Left ventricle myocardium inferior (tissue), 1 donor: ENCODE measurements at regions of chr16 and their contacts with region 1.

Region 1: GRCh38 chr16:8963825-8964441 is at the start of gene USP7:
- DNase-seq: peak; percentile 95
- H3K4me3 ChIP-seq: peak within 1 kb of the TSS; percentile 85
- H3K27ac ChIP-seq: peak within 1 kb of the TSS; percentile 88
- H3K4me1 ChIP-seq: peaks cover 46% of the 10 kb centered on the region
- H3K27me3 ChIP-seq: no peaks in the 10 kb centered on the region
- CTCF ChIP-seq: no peak
- total RNA-seq, gene USP7: 54.7 TPM

Region 2: DNA sequence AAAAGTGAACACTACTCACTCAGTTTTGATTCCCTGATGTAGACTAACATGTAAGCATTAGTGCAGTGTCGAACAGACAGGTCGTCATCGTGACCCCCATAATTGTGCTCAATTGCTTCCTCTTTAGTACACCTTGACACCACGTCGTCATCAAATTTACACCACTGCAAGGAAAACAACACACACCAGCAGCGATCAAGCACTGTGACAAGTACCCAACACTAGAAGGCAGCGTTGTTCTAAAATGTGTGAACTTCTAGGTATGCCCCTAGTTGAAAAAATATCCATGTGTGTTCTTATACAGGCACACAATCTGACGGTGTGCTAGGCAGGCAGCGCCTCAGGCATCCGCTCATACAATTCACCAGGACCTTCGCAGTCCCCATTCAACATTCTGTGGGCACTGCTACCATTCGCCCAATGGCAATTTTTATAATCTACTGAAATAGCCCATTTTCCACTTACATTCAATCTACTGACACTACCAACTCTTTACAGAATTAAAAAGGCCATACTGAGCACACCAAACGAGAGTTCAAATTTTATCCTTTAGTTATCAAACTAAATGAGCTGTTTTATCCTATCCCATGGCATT is 58.7 kb before region 1 on chr16:
- intact Hi-C with region 1: loop called (anchors 10 kb)
- DNase-seq: no peak
- H3K4me3 ChIP-seq: no peak overlapping the region
- H3K27ac ChIP-seq: no peak overlapping the region
- H3K4me1 ChIP-seq: no peaks in the 10 kb centered on the region
- H3K27me3 ChIP-seq: no peaks in the 10 kb centered on the region
- CTCF ChIP-seq: no peak